ENCODE measurements at regions of chr7 and their contacts with region 1.

Region 1: GRCh38 chr7:85023045-85023712 is 163.7 kb downstream of the SEMA3D start:
- DNase-seq: peak; percentile 41
- H3K4me3 ChIP-seq: no peak overlapping the region
- H3K27ac ChIP-seq: no peak overlapping the region
- H3K4me1 ChIP-seq: no peaks in the 10 kb centered on the region
- CTCF ChIP-seq: peak; percentile 88

Region 2: GRCh38 chr7:83936056-83936708 is 1087.0 kb before region 1 on chr7:
- CTCF ChIA-PET with region 1: no interaction called
- POLR2A ChIA-PET with region 1: no interaction called
- intact Hi-C with region 1: loop called (anchors 5 kb)
- DNase-seq: peak; percentile 45
- H3K4me3 ChIP-seq: no peak overlapping the region
- H3K27ac ChIP-seq: no peak overlapping the region
- H3K4me1 ChIP-seq: no peaks in the 10 kb centered on the region
- CTCF ChIP-seq: peak; percentile 95

Region 3: GRCh38 chr7:83976295-83976694 is 1046.9 kb before region 1 on chr7:
- CTCF ChIA-PET with region 1: no interaction called
- POLR2A ChIA-PET with region 1: no interaction called
- intact Hi-C with region 1: loop called (anchors 1 kb)
- DNase-seq: peak; percentile 36
- H3K4me3 ChIP-seq: no peak overlapping the region
- H3K27ac ChIP-seq: no peak overlapping the region
- H3K4me1 ChIP-seq: no peaks in the 10 kb centered on the region
- CTCF ChIP-seq: peak; percentile 86

Region 4: DNA sequence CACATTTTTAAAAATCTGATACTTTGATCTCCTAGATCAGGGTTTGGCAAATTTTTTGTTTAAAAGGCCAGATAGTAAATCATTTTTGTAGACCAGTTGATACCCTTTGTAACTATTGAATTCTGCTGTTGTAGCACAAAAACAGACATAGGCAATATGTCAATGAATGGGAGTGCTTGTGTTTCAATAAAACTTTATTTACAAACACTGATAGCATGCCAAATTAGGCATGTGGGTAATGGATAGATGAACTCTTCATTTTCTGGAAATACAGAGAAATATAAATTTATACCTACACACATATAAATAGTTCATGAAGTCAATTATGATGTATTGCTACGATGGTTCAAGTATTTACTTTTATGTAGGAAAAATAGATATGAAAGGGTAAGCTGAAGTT is 889.0 kb before region 1 on chr7:
- CTCF ChIA-PET with region 1: no interaction called
- POLR2A ChIA-PET with region 1: no interaction called
- intact Hi-C with region 1: no loop called
- DNase-seq: no peak
- H3K4me3 ChIP-seq: no peak overlapping the region
- H3K27ac ChIP-seq: no peak overlapping the region
- H3K4me1 ChIP-seq: no peaks in the 10 kb centered on the region
- CTCF ChIP-seq: no peak

Region 5: GRCh38 chr7:84568781-84569180 is 454.4 kb before region 1 on chr7:
- CTCF ChIA-PET with region 1: no interaction called
- POLR2A ChIA-PET with region 1: no interaction called
- intact Hi-C with region 1: no loop called
- DNase-seq: no peak
- H3K4me3 ChIP-seq: no peak overlapping the region
- H3K27ac ChIP-seq: no peak overlapping the region
- H3K4me1 ChIP-seq: no peaks in the 10 kb centered on the region
- CTCF ChIP-seq: no peak